Activated CD4-positive, alpha-beta T cell treated with anti-CD3 and anti-CD28 coated beads, Interleukin-2, amount 10 ng/mL, durations not matched to agents 24 days and 14 days (primary cell): ENCODE measurements at regions of chr12 and their contacts with region 1.

Region 1: GRCh38 chr12:49366652-49367380 is 446 bp upstream of the SPATS2 start:
- DNase-seq: peak; percentile 97
- H3K4me3 Mint-ChIP-seq: peak overlapping the region; percentile 85
- H3K27ac Mint-ChIP-seq: peak overlapping the region; percentile 93
- H3K4me1 Mint-ChIP-seq: peaks cover 30% of the 10 kb centered on the region
- H3K27me3 Mint-ChIP-seq: peaks cover 1% of the 10 kb centered on the region

Region 2: DNA sequence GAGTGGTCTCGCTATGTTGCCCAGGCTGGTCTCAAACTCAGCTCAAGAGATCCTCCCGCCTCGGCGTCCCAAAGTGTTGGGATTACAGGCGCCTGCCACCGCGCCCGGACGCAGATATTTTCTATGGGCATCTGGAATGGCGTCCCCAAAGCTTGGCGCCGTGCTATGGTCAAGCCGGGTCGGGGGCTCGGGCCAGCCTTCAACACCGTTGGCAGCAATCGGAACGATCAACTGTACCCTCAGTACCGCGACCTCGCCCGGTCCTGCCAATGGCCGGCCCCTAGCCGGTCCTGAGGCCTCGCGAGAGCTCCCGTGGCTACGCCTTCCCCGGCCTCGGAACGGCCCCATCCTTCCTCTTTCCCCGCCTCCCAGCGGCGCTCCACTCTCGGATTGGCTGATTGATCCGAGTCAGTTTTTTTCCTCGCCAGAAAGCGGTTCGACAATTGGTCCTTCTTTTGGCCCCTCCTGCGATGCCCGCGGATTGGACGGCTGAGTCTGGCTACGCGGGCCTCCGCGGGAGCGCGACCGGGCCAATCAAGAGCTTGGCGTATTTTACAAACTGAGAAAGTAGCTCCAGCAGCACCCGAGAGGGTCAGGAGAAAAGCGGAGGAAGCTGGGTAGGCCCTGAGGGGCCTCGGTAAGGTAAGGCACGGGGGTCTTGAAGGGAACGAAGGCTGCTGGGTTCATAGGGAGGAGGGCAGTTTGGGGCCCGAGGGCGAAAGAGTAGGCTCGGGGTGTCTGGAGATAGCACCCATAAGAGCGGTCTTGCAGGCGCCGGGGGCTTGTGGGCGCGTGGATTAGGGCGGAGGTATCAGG is 43.9 kb before region 1 on chr12 and contains the start of gene TROAP:
- intact Hi-C with region 1: loop called (anchors 1 kb)
- DNase-seq: peak; percentile 99
- H3K4me3 Mint-ChIP-seq: peak within 1 kb of the TSS; percentile 94
- H3K27ac Mint-ChIP-seq: peak within 1 kb of the TSS; percentile 88
- H3K4me1 Mint-ChIP-seq: peaks cover 24% of the 10 kb centered on the region
- H3K27me3 Mint-ChIP-seq: no peaks in the 10 kb centered on the region
- total RNA-seq, gene TROAP: 49.9 and 51.6 TPM in 2 replicates

Region 3: GRCh38 chr12:49347384-49348237 is 19.2 kb before region 1 on chr12:
- intact Hi-C with region 1: no loop called
- DNase-seq: peak; percentile 94
- H3K4me3 Mint-ChIP-seq: peak overlapping the region; percentile 84
- H3K27ac Mint-ChIP-seq: peak overlapping the region; percentile 67
- H3K4me1 Mint-ChIP-seq: peaks cover 30% of the 10 kb centered on the region
- H3K27me3 Mint-ChIP-seq: peaks cover 66% of the 10 kb centered on the region

Region 4: GRCh38 chr12:49451468-49452259 is 84.8 kb after region 1 on chr12:
- intact Hi-C with region 1: loop called (anchors 1 kb)
- DNase-seq: no peak
- H3K4me3 Mint-ChIP-seq: peak overlapping the region; percentile 51
- H3K27ac Mint-ChIP-seq: peak overlapping the region; percentile 86
- H3K4me1 Mint-ChIP-seq: peaks cover 14% of the 10 kb centered on the region
- H3K27me3 Mint-ChIP-seq: no peaks in the 10 kb centered on the region